ENCODE measurements at regions of chr6 and their contacts with region 1.

Region 1: DNA sequence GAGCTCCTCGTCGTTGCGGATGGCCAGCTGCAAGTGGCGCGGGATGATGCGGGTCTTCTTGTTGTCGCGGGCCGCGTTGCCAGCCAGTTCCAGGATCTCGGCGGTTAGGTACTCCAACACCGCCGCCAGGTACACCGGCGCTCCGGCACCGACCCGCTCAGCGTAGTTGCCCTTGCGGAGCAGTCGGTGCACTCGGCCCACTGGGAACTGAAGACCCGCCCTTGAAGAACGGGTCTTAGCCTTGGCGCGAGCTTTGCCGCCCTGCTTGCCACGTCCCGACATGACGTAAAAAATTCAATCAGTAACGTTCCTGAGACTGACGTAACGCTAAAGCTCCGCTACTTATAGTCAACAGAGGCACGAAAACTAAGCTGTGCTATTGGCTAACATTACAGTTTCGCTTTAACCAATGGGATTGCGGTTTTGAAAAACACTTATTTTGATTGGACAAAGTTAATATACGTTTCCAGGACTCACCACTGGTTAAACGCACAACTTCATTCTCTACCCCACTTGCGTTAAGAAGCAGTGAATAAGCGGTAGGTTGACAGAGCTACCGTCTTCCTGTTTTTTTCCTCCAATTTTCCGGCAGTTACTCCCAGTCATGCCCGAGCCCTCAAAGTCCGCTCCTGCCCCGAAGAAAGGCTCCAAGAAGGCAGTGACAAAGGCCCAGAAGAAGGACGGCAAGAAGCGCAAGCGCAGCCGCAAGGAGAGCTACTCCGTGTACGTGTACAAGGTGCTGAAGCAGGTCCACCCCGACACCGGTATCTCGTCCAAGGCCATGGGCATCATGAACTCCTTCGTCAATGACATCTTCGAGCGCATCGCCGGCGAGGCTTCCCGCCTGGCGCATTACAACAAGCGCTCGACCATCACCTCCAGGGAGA is 73.9 kb downstream of the OR2B2 start:
- DNase-seq: peak; percentile 52 to 98 (median 73)
- ATAC-seq: peak; percentile 73
- H3K4me3 ChIP-seq: peak overlapping the region; percentile 83
- H3K4me3 Mint-ChIP-seq: no peak overlapping the region
- H3K27ac ChIP-seq: peak overlapping the region; percentile 92 to 97
- H3K27ac Mint-ChIP-seq: no peak overlapping the region
- H3K4me1 ChIP-seq: peaks cover 32% of the 10 kb centered on the region
- H3K4me1 Mint-ChIP-seq: peaks cover 6% of the 10 kb centered on the region
- H3K27me3 ChIP-seq: peaks cover 0 to 6% of the 10 kb centered on the region in 2 experiments
- H3K27me3 Mint-ChIP-seq: peaks cover 12% of the 10 kb centered on the region
- CTCF ChIP-seq: no peak

Region 2: GRCh38 chr6:26020329-26021000 is 1817.8 kb before region 1 on chr6:
- CTCF ChIA-PET with region 1: no interaction called
- POLR2A ChIA-PET with region 1: interaction called, 85 read pairs
- intact Hi-C with region 1: no loop called
- DNase-seq: peak; percentile 63 to 96 (median 78)
- ATAC-seq: peak; percentile 50
- H3K4me3 ChIP-seq: peak overlapping the region; percentile 73
- H3K4me3 Mint-ChIP-seq: peak overlapping the region; percentile 95
- H3K27ac ChIP-seq: peak overlapping the region; percentile 95 to 96
- H3K27ac Mint-ChIP-seq: peak overlapping the region; percentile 97
- H3K4me1 ChIP-seq: peaks cover 38% of the 10 kb centered on the region
- H3K4me1 Mint-ChIP-seq: peaks cover 41% of the 10 kb centered on the region
- H3K27me3 ChIP-seq: no peaks in the 10 kb centered on the region
- H3K27me3 Mint-ChIP-seq: no peaks in the 10 kb centered on the region
- CTCF ChIP-seq: no peak

Region 3: DNA sequence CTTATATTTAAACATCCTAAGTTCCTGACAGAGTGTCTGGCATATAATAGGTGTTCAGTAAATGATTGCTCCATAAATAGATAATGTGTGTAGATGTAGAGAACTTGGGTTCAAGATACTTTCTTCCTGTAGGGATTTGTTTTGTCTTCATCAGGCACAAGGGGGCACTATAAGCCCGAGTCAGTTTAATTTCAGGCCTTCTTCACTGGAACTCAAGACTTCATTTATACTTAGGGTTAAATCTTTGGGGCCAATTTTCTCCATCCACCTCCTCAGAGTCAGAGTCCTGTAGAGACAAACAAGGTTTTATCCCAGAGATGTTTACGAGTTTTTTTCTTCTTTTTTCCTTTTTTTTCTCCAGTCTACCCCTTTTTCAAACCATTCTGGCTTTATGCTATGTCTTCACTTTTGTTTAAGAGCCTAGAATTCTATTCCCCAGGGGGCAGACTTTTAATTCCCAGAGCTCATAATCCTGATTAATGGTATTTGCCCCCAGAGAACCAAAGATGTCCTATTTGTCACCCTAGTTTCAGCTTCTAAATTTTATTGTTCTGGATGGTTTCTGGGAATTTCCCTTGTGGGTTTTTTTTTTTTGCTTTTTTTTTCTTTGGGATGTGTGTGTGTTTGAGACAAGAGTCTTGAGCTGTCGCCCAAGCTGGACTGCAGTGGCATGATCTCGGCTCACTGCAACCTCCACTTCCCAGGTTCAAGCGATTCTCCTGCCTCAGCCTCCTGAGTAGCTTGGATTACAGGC is 1662.7 kb before region 1 on chr6:
- CTCF ChIA-PET with region 1: no interaction called
- POLR2A ChIA-PET with region 1: interaction called, 12 read pairs
- intact Hi-C with region 1: no loop called
- DNase-seq: peak in 11 of 14 experiments; percentile 13 to 85 (median 54)
- ATAC-seq: no peak
- H3K4me3 ChIP-seq: no peak overlapping the region
- H3K4me3 Mint-ChIP-seq: peak overlapping the region; percentile 83
- H3K27ac ChIP-seq: peak overlapping the region in 1 of 2 donors; percentile 41
- H3K27ac Mint-ChIP-seq: peak overlapping the region; percentile 93
- H3K4me1 ChIP-seq: peaks cover 17% of the 10 kb centered on the region
- H3K4me1 Mint-ChIP-seq: peaks cover 53% of the 10 kb centered on the region
- H3K27me3 ChIP-seq: no peaks in the 10 kb centered on the region
- H3K27me3 Mint-ChIP-seq: no peaks in the 10 kb centered on the region
- CTCF ChIP-seq: peak; percentile 87

Region 4: DNA sequence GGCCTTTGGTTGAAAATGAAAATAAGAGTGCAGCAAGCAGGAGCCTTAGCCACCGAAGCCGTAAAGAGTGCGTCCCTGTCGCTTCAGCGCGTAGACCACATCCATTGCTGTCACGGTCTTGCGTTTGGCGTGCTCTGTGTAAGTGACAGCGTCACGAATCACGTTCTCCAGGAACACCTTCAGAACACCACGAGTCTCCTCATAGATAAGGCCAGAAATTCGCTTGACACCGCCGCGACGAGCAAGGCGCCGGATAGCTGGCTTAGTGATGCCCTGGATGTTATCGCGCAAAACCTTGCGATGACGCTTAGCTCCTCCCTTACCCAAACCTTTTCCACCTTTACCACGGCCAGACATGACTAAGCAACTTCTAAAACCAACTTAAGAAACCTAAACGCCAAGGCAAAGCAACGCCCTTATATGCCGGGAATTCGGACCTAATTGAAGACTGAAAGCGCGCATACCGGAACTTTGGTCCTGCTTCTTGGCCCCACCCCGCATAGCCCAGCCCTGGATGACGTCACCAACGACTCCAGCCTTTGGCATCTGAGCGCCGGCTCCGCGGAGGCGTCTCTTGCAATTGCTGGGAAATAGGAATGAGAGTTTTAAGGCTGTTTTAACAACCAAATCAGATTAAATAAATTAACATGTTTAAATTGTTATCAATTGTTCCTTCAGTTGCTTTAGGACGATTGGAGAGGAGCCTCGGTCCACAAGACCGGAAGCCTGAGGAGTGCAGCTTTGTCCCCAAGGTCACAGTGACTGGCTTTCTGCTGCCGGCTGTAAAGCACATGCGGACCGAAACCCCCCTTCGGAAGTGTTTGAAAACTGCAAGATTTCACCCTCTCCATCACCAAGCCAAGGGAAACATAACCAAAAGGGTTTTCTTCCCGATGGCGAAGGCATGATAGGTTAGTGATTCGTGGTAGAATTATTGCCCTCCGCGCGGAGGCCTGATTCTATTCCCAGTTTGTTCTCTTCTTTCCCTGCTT is 1552.9 kb before region 1 on chr6:
- CTCF ChIA-PET with region 1: no interaction called
- POLR2A ChIA-PET with region 1: interaction called, 15 read pairs
- intact Hi-C with region 1: loop called (anchors 10 kb)
- DNase-seq: peak; percentile 85 to 99 (median 92)
- ATAC-seq: peak; percentile 82
- H3K4me3 ChIP-seq: peak overlapping the region; percentile 62
- H3K4me3 Mint-ChIP-seq: peak overlapping the region; percentile 87
- H3K27ac ChIP-seq: peak overlapping the region; percentile 82 to 85
- H3K27ac Mint-ChIP-seq: peak overlapping the region; percentile 96
- H3K4me1 ChIP-seq: peaks cover 16% of the 10 kb centered on the region
- H3K4me1 Mint-ChIP-seq: peaks cover 24% of the 10 kb centered on the region
- H3K27me3 ChIP-seq: no peaks in the 10 kb centered on the region
- H3K27me3 Mint-ChIP-seq: peaks cover 11% of the 10 kb centered on the region
- CTCF ChIP-seq: no peak

Region 5: DNA sequence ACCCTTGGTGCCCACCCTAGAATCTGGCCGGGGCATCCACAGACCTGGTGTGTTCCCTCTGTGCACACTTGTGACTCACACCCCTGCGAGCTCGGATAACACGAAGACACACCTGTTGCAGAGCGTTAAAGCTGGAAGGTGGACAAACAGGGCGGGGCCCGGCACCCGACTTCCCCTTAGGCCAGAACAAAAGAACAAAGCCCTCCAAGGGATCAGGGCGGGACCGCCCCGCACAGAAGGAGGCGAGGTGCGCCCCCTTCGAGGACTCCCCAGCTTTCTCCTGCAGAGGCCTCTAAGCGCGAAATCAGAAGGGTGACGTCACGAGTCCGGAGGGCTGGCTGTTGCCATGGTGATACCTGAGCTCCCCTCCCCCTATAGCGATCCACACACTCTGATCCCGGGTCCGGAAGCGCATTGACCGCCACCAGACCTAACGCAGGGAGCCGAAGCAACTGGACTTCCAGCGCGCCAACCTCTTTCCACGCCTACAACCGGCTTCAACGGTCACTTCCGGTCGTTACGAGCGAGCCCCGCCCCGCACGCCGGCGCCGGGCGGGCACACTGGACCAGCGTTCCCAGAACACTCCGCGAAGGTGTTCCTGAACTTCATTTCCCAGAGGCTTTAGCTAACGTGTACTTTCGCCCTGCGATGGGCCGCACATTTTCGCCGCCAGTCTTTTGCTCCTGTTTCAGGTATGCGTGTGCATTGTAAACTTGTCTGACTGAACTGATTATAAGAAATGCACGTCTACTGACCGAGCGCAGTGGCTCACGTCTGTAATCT is 365.5 kb before region 1 on chr6 and contains the start of gene ZNF184:
- CTCF ChIA-PET with region 1: no interaction called
- POLR2A ChIA-PET with region 1: interaction called, 43 read pairs
- intact Hi-C with region 1: no loop called
- DNase-seq: peak; percentile 68 to 94 (median 80)
- ATAC-seq: peak; percentile 59
- H3K4me3 ChIP-seq: peak within 1 kb of the TSS; percentile 85
- H3K4me3 Mint-ChIP-seq: peak within 1 kb of the TSS; percentile 88
- H3K27ac ChIP-seq: peak within 1 kb of the TSS; percentile 88 to 96
- H3K27ac Mint-ChIP-seq: peak within 1 kb of the TSS; percentile 91
- H3K4me1 ChIP-seq: peaks cover 21% of the 10 kb centered on the region
- H3K4me1 Mint-ChIP-seq: peaks cover 53% of the 10 kb centered on the region
- H3K27me3 ChIP-seq: no peaks in the 10 kb centered on the region
- H3K27me3 Mint-ChIP-seq: no peaks in the 10 kb centered on the region
- CTCF ChIP-seq: no peak
- total RNA-seq, gene ZNF184: 19.6 to 21.1 TPM

Region 6: GRCh38 chr6:27809939-27810767 is 28.1 kb before region 1 on chr6:
- CTCF ChIA-PET with region 1: interaction called, 13 read pairs
- POLR2A ChIA-PET with region 1: interaction called, 915 read pairs
- intact Hi-C with region 1: loop called (anchors 1 to 2 kb)
- DNase-seq: peak; percentile 63 to 98 (median 75)
- ATAC-seq: peak; percentile 61
- H3K4me3 ChIP-seq: peak overlapping the region; percentile 64
- H3K4me3 Mint-ChIP-seq: peak overlapping the region; percentile 95
- H3K27ac ChIP-seq: peak overlapping the region; percentile 69 to 81
- H3K27ac Mint-ChIP-seq: peak overlapping the region; percentile 96
- H3K4me1 ChIP-seq: peaks cover 39% of the 10 kb centered on the region
- H3K4me1 Mint-ChIP-seq: peaks cover 68% of the 10 kb centered on the region
- H3K27me3 ChIP-seq: no peaks in the 10 kb centered on the region
- H3K27me3 Mint-ChIP-seq: no peaks in the 10 kb centered on the region
- CTCF ChIP-seq: no peak

Region 7: GRCh38 chr6:28880894-28881780 is 1042.8 kb after region 1 on chr6:
- CTCF ChIA-PET with region 1: no interaction called
- POLR2A ChIA-PET with region 1: interaction called, 12 read pairs
- intact Hi-C with region 1: no loop called
- DNase-seq: peak in 13 of 14 experiments; percentile 27 to 71 (median 43)
- ATAC-seq: no peak
- H3K4me3 ChIP-seq: peak overlapping the region; percentile 39
- H3K4me3 Mint-ChIP-seq: peak overlapping the region; percentile 77
- H3K27ac ChIP-seq: no peak overlapping the region
- H3K27ac Mint-ChIP-seq: peak overlapping the region; percentile 81
- H3K4me1 ChIP-seq: peaks cover 24% of the 10 kb centered on the region
- H3K4me1 Mint-ChIP-seq: peaks cover 39% of the 10 kb centered on the region
- H3K27me3 ChIP-seq: no peaks in the 10 kb centered on the region
- H3K27me3 Mint-ChIP-seq: peaks cover 7% of the 10 kb centered on the region
- CTCF ChIP-seq: no peak

Measured in CD4-positive, alpha-beta T cell (primary cell).